ENCODE measurements at regions of chr5 and their contacts with region 1.

Region 1: GRCh38 chr5:91162534-91163381 is 220.4 kb downstream of the ARRDC3 start:
- DNase-seq: peak; percentile 94
- H3K4me3 Mint-ChIP-seq: peak overlapping the region; percentile 2
- H3K27ac Mint-ChIP-seq: peak overlapping the region; percentile 53
- H3K4me1 Mint-ChIP-seq: peaks cover 55% of the 10 kb centered on the region
- H3K27me3 Mint-ChIP-seq: no peaks in the 10 kb centered on the region
- CTCF ChIP-seq: no peak

Region 2: DNA sequence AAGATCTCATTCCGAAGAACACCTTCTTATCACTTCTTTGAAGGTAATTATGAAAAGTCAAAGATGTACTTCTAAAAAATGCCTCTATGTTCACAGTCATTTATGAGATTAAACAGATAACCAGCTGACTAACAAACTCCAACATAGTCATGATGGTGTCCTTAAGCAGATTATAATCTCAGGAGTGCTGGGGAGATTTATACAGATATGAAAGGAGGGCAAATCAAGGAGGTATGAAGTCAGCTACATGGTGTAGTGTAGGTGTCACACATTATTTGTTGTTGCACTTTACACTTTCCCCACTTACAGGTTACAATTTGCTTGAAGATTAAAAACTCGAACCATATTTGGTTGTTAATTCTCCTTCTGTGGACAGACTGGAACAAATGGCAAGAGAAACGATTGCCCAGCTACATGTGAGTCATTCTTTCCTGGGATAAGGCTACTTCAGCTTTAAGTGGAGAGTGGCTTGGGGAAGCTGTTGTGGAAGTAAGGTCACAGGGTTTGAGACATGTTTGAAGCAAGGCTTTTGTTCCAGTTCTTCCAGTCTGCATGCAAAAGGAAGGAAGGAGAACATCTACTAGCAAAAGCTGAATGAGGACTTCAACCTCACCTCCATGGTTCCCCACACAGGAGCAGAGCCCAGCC is 284.1 kb before region 1 on chr5:
- CTCF ChIA-PET with region 1: no interaction called
- intact Hi-C with region 1: no loop called
- DNase-seq: no peak
- H3K4me3 Mint-ChIP-seq: no peak overlapping the region
- H3K27ac Mint-ChIP-seq: no peak overlapping the region
- H3K4me1 Mint-ChIP-seq: peaks cover 13% of the 10 kb centered on the region
- H3K27me3 Mint-ChIP-seq: no peaks in the 10 kb centered on the region
- CTCF ChIP-seq: no peak

Region 3: DNA sequence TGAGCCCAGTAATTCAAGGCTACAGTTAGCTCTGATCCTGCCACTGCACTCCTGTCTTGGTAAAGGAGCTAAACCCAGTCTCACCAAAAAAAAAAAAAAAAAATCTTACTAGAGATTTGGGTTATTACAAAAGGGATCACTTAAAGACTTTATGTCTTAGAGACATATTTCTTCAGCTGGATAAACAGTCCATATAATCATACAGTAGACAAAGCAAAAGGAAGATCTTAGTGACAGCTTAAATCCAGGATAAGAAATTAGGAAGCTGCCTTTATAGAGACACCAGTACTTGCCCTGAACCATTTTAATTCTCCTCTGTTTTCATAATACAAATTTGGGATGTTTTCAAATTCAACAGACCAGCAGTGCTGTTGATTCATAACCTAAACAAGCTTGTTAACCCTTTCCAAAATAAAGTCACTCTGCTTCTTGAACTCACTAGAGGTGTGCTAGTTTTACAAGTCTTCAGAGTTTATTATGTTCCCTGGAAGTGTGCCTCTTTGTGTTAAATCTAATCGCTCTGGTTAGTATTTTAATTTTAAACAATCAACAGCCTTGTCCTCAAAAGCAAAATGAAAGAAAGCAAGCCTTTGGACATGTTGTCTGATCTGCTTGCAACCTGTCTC is 35.2 kb before region 1 on chr5:
- CTCF ChIA-PET with region 1: no interaction called
- intact Hi-C with region 1: loop called (anchors 2 kb)
- DNase-seq: no peak
- H3K4me3 Mint-ChIP-seq: no peak overlapping the region
- H3K27ac Mint-ChIP-seq: peak overlapping the region; percentile 69
- H3K4me1 Mint-ChIP-seq: peaks cover 55% of the 10 kb centered on the region
- H3K27me3 Mint-ChIP-seq: no peaks in the 10 kb centered on the region
- CTCF ChIP-seq: no peak

Region 4: GRCh38 chr5:91219803-91220371 is 57.1 kb after region 1 on chr5:
- CTCF ChIA-PET with region 1: no interaction called
- intact Hi-C with region 1: loop called (anchors 2 kb)
- DNase-seq: peak; percentile 56
- H3K4me3 Mint-ChIP-seq: no peak overlapping the region
- H3K27ac Mint-ChIP-seq: peak overlapping the region; percentile 51
- H3K4me1 Mint-ChIP-seq: peaks cover 45% of the 10 kb centered on the region
- H3K27me3 Mint-ChIP-seq: no peaks in the 10 kb centered on the region
- CTCF ChIP-seq: peak; percentile 32